Activated T-helper 1 cell treated with anti-CD3 and anti-CD28 coated beads, Interleukin-12 subunit alpha, Interleukin-12 subunit beta, Interleukin-2, Interleukin-4 antibody, amounts not matched to agents 30 ng/mL and 10 ng/mL and 1 ng/mL, durations not matched to agents 14 hours and 24 hours and 36 hours (primary cell): ENCODE measurements at regions of chr19 and their contacts with region 1.

Region 1: GRCh38 chr19:2950286-2951124 is 5.7 kb upstream of the ZNF77 start:
- DNase-seq: peak; percentile 99
- H3K4me3 Mint-ChIP-seq: peak overlapping the region; percentile 95
- H3K27ac Mint-ChIP-seq: peak overlapping the region; percentile 90
- H3K4me1 Mint-ChIP-seq: peaks cover 20% of the 10 kb centered on the region
- H3K27me3 Mint-ChIP-seq: no peaks in the 10 kb centered on the region

Region 2: GRCh38 chr19:2543463-2544442 is 406.8 kb before region 1 on chr19:
- intact Hi-C with region 1: no loop called
- DNase-seq: peak; percentile 47
- H3K4me3 Mint-ChIP-seq: peak overlapping the region; percentile 38
- H3K27ac Mint-ChIP-seq: peak overlapping the region; percentile 33
- H3K4me1 Mint-ChIP-seq: peaks cover 16% of the 10 kb centered on the region
- H3K27me3 Mint-ChIP-seq: no peaks in the 10 kb centered on the region

Region 3: DNA sequence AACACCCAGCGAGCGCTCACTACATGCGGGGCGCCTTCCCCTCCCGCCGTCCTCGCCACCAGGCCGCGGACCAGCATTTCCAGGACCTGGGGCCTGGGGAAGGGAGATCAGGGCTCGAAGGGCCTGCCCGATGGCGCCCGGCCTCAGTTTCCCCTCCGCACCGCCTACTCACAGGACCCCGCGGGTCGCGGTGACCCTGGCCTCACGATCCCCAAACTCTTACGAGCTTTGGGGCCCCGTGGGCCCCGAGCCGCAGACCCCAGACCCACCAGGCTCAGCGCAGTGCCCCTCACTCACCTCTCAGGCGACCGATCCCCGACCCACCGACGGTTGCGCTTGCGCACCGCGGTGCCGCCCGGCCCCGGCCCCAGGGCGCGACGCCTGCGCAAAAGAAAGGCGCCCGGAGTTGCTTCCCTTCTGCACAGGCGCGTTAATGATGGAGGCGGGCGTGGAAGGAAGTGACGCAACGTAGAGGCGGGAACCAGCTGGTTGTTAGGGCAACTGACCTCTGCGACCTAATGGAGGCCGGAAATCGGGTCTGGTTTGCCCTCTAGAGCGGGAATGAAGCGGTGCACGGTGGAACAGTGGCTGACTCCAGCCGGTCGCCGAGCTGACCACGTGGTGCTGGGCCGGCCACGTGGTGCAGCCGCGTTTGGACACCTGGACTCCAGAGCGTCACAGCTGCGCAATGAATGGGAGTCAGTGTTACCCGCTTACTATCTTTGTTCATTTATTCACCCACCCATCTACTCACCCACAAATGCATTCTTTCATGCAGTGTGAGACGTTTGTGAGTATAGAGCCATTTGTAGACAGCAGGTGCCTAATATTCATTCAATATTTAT is 167.3 kb before region 1 on chr19 and contains the start of gene SGTA:
- intact Hi-C with region 1: loop called (anchors 2 kb)
- DNase-seq: peak; percentile 96
- H3K4me3 Mint-ChIP-seq: peak within 1 kb of the TSS; percentile 98
- H3K27ac Mint-ChIP-seq: peak within 1 kb of the TSS; percentile 89
- H3K4me1 Mint-ChIP-seq: peaks cover 62% of the 10 kb centered on the region
- H3K27me3 Mint-ChIP-seq: no peaks in the 10 kb centered on the region
- total RNA-seq, gene SGTA: 73.4 and 77.8 TPM in 2 replicates

Region 4: DNA sequence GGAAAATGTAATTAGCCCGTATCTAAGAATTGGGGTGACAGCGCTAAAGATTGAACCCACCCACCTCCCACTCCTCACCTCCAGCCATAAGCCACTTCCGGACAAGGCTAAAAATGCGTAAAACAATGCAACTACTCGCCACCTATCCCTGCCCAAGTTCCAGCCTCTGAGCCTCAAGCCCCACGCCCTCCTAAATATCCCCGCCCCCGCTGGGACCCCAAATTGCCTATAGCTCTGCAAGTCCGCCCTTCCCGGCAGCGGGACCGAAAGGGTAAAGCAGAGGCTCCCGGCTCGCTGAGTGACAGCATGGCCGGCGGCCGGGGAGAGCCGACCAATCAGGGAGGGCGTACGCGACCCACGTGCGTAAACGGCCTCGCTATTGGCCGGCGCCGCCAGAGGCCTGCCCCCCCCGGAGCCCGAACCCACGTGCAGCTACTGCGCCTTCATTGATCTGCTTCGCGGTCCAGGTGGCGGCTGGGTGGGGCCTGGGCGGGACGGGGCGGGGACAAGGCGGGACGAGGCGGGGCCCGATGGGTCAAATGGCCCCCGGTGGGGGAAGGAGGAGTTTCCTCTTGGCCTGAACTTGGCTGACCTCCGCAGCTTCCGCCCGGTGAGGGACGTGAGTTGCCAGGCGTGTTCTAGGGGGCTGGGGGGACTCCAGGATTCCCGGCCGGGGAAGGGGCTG is 26.6 kb after region 1 on chr19 and contains the start of gene TLE6:
- intact Hi-C with region 1: loop called (anchors 1 kb)
- DNase-seq: peak; percentile 89
- H3K4me3 Mint-ChIP-seq: peak within 1 kb of the TSS; percentile 92
- H3K27ac Mint-ChIP-seq: peak within 1 kb of the TSS; percentile 86
- H3K4me1 Mint-ChIP-seq: peaks cover 18% of the 10 kb centered on the region
- H3K27me3 Mint-ChIP-seq: peaks cover 37% of the 10 kb centered on the region
- total RNA-seq, gene TLE6: 0.57 and 0.83 TPM in 2 replicates

Region 5: DNA sequence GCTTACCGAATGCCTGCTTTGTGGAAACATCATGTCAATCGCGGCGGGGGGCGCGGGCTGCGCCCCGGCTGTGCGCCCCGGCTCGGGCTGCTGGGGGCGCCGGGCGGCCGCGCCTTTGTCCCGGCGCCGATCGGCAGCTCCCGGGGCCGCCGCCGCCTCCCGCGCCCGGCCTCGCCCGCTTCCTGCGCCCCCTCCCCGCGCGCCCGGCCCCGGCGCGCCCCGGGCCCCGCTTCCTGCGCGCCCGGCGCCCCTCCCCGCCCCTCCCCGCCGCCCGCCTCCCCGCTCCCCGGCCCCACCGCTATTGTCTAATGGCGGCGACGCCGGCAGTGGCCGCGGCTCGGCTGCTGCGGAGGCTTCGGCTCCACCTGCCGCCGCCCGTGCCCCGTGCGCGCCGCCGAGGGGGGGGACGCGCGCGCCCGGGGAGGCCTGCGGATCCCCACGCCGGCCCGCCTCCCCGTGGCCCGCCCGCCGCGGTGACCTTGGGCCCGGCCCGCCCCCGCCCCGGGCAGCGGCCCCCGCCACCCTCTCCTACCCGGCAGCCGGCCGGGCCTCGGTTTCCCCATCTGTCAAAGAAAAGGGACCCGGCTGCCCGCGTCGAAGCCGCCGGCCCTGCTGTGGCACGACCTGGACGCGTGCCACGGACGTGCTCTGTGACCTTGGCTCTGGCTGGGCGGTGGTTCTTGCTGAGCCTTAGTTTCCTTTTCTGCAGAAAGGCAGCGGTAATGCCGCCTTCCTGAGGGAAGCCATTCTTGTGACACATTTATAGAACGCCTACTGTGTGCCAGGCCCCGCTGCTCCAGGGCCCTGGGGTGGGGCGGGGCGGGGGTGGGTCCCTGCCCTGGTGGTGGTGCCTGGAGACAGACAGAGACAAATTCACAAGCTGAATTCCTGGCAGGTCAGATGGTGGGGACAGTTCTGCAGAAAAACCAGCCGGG is 111.9 kb after region 1 on chr19 and contains the start of gene TLE5:
- intact Hi-C with region 1: loop called (anchors 2 kb)
- DNase-seq: peak; percentile 68
- H3K4me3 Mint-ChIP-seq: peak within 1 kb of the TSS; percentile 91
- H3K27ac Mint-ChIP-seq: peak within 1 kb of the TSS; percentile 99
- H3K4me1 Mint-ChIP-seq: peaks cover 20% of the 10 kb centered on the region
- H3K27me3 Mint-ChIP-seq: no peaks in the 10 kb centered on the region
- total RNA-seq, gene TLE5: 378 and 399 TPM in 2 replicates

Region 6: GRCh38 chr19:3163230-3163886 is 212.9 kb after region 1 on chr19:
- intact Hi-C with region 1: loop called (anchors 5 kb)
- DNase-seq: peak; percentile 61
- H3K4me3 Mint-ChIP-seq: no peak overlapping the region
- H3K27ac Mint-ChIP-seq: peak overlapping the region; percentile 59
- H3K4me1 Mint-ChIP-seq: peaks cover 51% of the 10 kb centered on the region
- H3K27me3 Mint-ChIP-seq: no peaks in the 10 kb centered on the region

Region 7: DNA sequence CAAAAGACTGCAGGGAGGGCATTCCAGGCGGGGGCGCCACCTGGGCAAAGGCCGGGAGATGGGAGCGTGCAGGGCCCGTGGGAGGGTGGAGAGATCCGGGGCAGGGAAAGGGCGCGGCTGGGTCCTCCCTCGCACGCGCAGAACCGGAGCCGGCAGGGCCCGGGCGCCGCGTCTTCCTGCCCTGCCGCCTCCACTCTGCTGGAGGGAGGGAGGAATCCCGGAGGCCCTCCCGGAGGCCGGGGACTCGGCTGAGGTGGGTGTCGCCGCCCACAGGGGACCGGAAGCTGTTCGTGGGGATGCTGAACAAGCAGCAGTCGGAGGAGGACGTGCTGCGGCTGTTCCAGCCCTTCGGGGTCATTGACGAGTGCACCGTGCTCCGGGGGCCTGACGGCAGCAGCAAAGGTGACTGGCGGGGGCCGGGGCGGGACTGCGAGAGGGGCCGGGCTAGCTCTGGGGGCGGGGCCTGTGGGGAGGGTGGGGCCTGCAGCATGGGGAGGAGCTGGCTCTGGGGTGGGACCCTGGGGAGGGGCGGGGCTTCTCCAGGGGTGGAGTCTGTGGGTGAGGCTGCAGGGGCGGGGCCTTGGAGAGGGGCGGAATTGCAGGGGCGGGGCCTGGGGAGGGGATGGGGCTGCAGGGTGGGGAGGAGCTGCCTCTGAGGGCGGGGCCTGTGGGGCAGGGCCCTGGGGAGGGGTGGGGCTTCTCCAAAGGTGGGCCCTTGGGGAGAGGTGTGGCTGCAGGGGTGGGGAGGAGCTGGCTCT is 325.3 kb after region 1 on chr19:
- intact Hi-C with region 1: loop called (anchors 1 kb)
- DNase-seq: peak; percentile 76
- H3K4me3 Mint-ChIP-seq: peak overlapping the region; percentile 78
- H3K27ac Mint-ChIP-seq: peak overlapping the region; percentile 75
- H3K4me1 Mint-ChIP-seq: peaks cover 8% of the 10 kb centered on the region
- H3K27me3 Mint-ChIP-seq: peaks cover 11% of the 10 kb centered on the region